Spleen (tissue), 13 donors: ENCODE measurements at regions of chr6 and their contacts with region 1.

Region 1: GRCh38 chr6:53530346-53530745 is 14.6 kb downstream of the GCLC start:
- DNase-seq: no peak
- H3K4me3 ChIP-seq: no peak overlapping the region
- H3K27ac ChIP-seq: no peak overlapping the region
- H3K4me1 ChIP-seq: peaks cover 0 to 55% (median 19%) of the 10 kb centered on the region in 6 donors
- H3K27me3 ChIP-seq: no peaks in the 10 kb centered on the region
- CTCF ChIP-seq: no peak
- POLR2A ChIP-seq: no peak

Region 2: DNA sequence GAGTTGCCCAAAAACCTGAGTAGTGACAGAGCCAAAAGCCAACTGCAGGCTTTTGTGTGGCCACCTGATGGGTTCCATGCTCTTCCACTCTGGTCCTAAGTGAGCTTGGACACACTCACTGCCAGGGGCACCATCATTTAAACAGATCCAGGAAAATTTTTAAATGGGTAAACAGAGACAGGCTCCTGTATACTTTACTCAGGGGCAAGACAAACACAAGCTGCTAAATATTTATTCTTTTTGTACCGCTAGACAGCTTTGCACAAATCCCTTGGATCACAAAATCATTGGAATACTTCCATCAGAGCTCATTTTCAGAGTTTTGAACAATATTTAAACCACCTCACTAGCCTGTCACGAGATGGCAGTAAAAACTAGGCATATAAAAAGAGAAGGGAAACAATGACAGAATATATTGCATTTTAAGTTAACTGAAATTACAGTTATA is 16.8 kb before region 1 on chr6:
- intact Hi-C with region 1: no loop called
- DNase-seq: no peak
- H3K4me3 ChIP-seq: no peak overlapping the region
- H3K27ac ChIP-seq: no peak overlapping the region
- H3K4me1 ChIP-seq: no peaks in the 10 kb centered on the region
- H3K27me3 ChIP-seq: no peaks in the 10 kb centered on the region
- CTCF ChIP-seq: no peak
- POLR2A ChIP-seq: no peak

Region 3: GRCh38 chr6:53547815-53548496 is 17.6 kb after region 1 on chr6:
- intact Hi-C with region 1: no loop called
- DNase-seq: peak; percentile 99
- H3K4me3 ChIP-seq: peak overlapping the region; percentile 45 to 74 (median 60)
- H3K27ac ChIP-seq: peak overlapping the region; percentile 77 to 90 (median 85)
- H3K4me1 ChIP-seq: peaks cover 24 to 50% (median 36%) of the 10 kb centered on the region in 6 donors
- H3K27me3 ChIP-seq: no peaks in the 10 kb centered on the region
- CTCF ChIP-seq: peak in 5 of 11 experiments; percentile 24 to 38 (median 33)
- POLR2A ChIP-seq: peak in 2 of 3 donors; percentile 17 to 18

Region 4: GRCh38 chr6:53651764-53652401 is 121.5 kb after region 1 on chr6:
- intact Hi-C with region 1: loop called (anchors 10 kb)
- DNase-seq: peak; percentile 95
- H3K4me3 ChIP-seq: peak overlapping the region; percentile 50 to 79 (median 62)
- H3K27ac ChIP-seq: peak overlapping the region; percentile 55 to 82 (median 78)
- H3K4me1 ChIP-seq: peaks cover 17 to 43% (median 32%) of the 10 kb centered on the region in 6 donors
- H3K27me3 ChIP-seq: peaks cover 0 to 12% (median 0%) of the 10 kb centered on the region in 7 donors
- CTCF ChIP-seq: peak in 10 of 11 experiments; percentile 19 to 66 (median 46)
- POLR2A ChIP-seq: no peak